ENCODE measurements at regions of chr9 and their contacts with region 1.

Region 1: GRCh38 chr9:87324613-87325194 is 173.0 kb upstream of the DAPK1 start:
- DNase-seq: no peak
- H3K4me3 ChIP-seq: no peak overlapping the region
- H3K27ac ChIP-seq: no peak overlapping the region
- H3K4me1 ChIP-seq: no peaks in the 10 kb centered on the region
- H3K27me3 ChIP-seq: no peaks in the 10 kb centered on the region
- CTCF ChIP-seq: peak; percentile 57 to 93 (median 80)
- POLR2A ChIP-seq: no peak

Region 2: DNA sequence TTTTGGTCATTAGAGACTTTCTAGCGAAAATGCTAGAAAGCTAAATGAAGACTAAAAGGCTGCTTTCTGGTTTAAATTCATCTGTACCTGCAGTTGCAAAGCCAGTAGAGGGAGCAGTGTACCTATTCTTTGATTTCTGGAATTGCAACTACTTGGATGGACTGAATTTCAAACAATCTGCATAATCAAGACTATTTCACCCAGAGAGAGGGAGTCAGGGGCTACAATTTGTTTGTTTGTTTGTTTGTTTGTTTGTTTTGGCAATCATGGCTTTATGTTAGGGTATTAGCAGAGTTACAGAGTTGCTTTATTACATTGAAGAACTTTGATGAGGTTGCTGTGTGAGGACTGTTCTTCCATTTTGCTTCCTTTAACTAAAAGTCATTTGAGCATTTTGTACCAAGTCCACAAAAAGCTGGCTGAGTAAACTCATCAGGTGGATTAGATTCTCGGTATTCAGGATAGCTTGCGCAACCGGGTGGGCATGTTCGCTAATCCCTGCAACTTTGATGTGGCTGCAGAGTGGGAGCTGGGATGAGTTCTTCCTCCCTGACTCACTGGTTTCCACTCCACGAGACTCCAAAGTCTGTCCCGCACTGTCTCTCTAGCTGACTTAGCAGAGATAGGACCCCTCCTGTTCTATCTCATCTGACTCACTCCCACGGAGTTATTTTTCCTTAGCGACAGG is 890.5 kb before region 1 on chr9:
- intact Hi-C with region 1: loop called (anchors 10 kb)
- DNase-seq: no peak
- H3K4me3 ChIP-seq: no peak overlapping the region
- H3K27ac ChIP-seq: no peak overlapping the region
- H3K4me1 ChIP-seq: no peaks in the 10 kb centered on the region
- H3K27me3 ChIP-seq: no peaks in the 10 kb centered on the region
- CTCF ChIP-seq: peak; percentile 14 to 83 (median 68)
- POLR2A ChIP-seq: no peak

Region 3: DNA sequence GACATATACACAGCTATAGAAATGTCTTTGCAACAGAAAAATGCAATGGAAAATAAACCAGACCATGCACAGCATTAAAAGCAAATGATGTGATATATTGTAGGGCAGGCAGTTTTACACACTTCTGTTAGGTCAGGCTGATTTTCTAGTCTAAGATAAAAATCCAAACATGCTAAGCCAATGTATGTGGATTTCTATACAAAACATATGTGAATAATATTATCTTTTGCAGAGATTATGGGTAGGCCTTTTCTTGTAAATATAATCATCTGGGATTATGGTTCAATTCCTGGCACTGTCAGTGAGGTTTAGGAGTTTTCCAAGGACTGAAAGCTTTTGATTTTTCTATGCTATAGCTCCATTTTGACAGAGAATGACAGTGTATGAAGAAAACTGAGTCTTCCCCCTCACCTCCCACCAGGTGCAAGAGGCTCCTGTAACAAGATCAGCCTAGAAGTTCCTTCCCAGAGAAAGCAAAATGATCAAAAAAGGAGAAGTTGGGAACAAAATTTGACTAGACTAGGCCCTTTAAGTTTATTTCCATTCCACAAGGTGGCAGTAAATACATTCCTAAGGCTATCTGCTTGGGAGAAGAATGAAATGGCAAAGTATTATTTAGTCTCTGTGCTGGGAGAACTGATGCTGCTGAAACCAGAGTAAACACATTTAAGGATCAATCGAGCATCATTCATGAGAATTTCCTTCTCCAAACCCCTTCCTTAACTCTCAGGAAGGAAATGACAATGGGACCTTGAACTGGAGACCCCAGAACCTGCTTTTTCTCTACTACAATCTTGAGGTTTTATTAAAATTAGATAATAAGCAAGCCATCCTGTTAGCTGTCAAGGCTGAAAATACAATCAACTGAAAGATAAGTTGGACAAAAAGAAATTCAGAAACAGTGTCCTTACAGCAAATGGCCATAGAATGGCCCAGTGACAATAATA is 837.5 kb before region 1 on chr9:
- intact Hi-C with region 1: loop called (anchors 5 kb)
- DNase-seq: no peak
- H3K4me3 ChIP-seq: no peak overlapping the region
- H3K27ac ChIP-seq: no peak overlapping the region
- H3K4me1 ChIP-seq: no peaks in the 10 kb centered on the region
- H3K27me3 ChIP-seq: no peaks in the 10 kb centered on the region
- CTCF ChIP-seq: peak in 4 of 6 experiments; percentile 43 to 72 (median 70)
- POLR2A ChIP-seq: no peak

Measured in thyroid gland (tissue), 4 donors.